ENCODE measurements at regions of chr17 and their contacts with region 1.

Region 1: GRCh38 chr17:39653662-39654331 is 11.4 kb upstream of the TCAP start:
- DNase-seq: peak; percentile 71
- ATAC-seq: peak; percentile 71
- H3K4me3 ChIP-seq: no peak overlapping the region
- H3K4me3 Mint-ChIP-seq: no peak overlapping the region
- H3K27ac ChIP-seq: no peak overlapping the region
- H3K27ac Mint-ChIP-seq: no peak overlapping the region
- H3K4me1 ChIP-seq: peaks cover 8 to 16% of the 10 kb centered on the region in 2 donors
- H3K4me1 Mint-ChIP-seq: peaks cover 36% of the 10 kb centered on the region
- H3K27me3 ChIP-seq: no peaks in the 10 kb centered on the region
- H3K27me3 Mint-ChIP-seq: no peaks in the 10 kb centered on the region
- CTCF ChIP-seq: peak; percentile 80

Region 2: DNA sequence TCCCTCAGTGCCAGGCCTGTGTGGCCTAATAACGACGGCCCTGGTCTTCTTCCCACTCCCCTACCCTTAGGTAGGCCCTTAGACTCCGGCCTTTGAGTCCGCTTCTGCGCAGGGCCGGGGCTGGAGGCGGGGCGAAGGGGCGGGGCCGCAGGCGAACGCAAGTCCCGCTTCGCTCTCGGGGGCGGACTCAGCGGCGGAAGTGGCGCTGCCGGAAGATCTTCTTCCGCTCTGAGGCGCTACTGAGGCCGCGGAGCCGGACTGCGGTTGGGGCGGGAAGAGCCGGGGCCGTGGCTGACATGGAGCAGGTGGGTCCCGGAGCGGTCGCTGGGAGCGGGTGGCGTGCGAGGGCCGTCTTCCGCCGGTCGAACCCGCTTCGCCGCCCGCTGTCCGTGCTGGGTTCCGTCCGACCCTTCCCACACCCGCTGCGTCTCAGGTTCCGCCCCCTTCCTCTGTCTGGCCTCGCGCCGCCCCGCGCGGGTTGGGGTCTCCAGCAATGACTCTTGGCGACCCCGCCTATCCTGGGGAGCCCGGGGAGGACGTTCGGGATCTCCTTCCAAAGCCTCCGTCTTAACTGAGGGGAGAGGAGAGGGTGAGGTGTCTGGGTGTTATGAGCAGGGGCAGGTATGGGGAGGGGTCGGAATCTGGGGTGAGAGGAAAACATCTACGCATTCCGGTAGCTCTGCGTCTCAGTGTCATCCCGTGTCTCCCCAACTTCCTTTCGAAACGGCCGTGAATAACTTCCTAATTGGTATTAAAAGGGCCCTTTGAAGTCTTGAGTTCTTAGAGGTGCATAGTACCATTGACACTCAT is 16.7 kb before region 1 on chr17 and contains the start of gene STARD3:
- CTCF ChIA-PET with region 1: interaction called, 20 read pairs
- POLR2A ChIA-PET with region 1: interaction called, 4 read pairs
- intact Hi-C with region 1: no loop called
- DNase-seq: peak; percentile 93
- ATAC-seq: peak; percentile 92
- H3K4me3 ChIP-seq: peak within 1 kb of the TSS; percentile 76 to 94 (median 82)
- H3K4me3 Mint-ChIP-seq: peak within 1 kb of the TSS; percentile 95
- H3K27ac ChIP-seq: peak within 1 kb of the TSS; percentile 89 to 90
- H3K27ac Mint-ChIP-seq: peak within 1 kb of the TSS; percentile 91
- H3K4me1 ChIP-seq: peaks cover 49 to 63% of the 10 kb centered on the region in 2 donors
- H3K4me1 Mint-ChIP-seq: peaks cover 60% of the 10 kb centered on the region
- H3K27me3 ChIP-seq: peaks cover 0 to 3% (median 0%) of the 10 kb centered on the region in 4 experiments
- H3K27me3 Mint-ChIP-seq: no peaks in the 10 kb centered on the region
- CTCF ChIP-seq: no peak
- total RNA-seq, gene STARD3: 93.1 and 101 TPM in 2 replicates

Region 3: DNA sequence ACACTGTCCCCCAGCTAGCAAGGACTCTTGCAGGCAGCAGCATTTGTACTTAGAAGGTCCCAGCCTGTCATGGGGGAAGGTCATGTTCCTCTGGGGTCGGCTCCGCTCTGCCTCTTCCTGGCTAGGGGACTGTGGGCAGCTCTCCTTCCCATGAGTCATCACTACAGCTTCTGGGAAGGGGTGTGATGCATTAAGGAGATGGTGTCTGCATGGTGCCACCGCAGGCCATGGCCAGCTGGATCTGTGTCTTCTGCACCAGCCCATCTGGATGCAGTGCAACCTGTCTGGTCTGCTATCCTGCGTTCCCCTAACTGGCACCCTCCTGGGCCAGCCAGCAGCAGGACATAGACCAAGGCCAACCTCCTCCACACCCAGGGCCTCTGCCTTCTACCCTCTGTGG is 10.5 kb before region 1 on chr17:
- CTCF ChIA-PET with region 1: interaction called, 22 read pairs
- POLR2A ChIA-PET with region 1: interaction called, 4 read pairs
- intact Hi-C with region 1: no loop called
- DNase-seq: no peak
- ATAC-seq: no peak
- H3K4me3 ChIP-seq: no peak overlapping the region
- H3K4me3 Mint-ChIP-seq: no peak overlapping the region
- H3K27ac ChIP-seq: no peak overlapping the region
- H3K27ac Mint-ChIP-seq: no peak overlapping the region
- H3K4me1 ChIP-seq: peaks cover 30 to 46% of the 10 kb centered on the region in 2 donors
- H3K4me1 Mint-ChIP-seq: peaks cover 55% of the 10 kb centered on the region
- H3K27me3 ChIP-seq: no peaks in the 10 kb centered on the region
- H3K27me3 Mint-ChIP-seq: no peaks in the 10 kb centered on the region
- CTCF ChIP-seq: no peak

Region 4: GRCh38 chr17:39668199-39668966 is 14.6 kb after region 1 on chr17 and contains the start of gene PNMT:
- CTCF ChIA-PET with region 1: interaction called, 61 read pairs
- POLR2A ChIA-PET with region 1: interaction called, 6 read pairs
- intact Hi-C with region 1: no loop called
- DNase-seq: peak; percentile 82
- ATAC-seq: peak; percentile 76
- H3K4me3 ChIP-seq: peak within 1 kb of the TSS in 4 of 5 experiments; percentile 28 to 62 (median 53)
- H3K4me3 Mint-ChIP-seq: peak within 1 kb of the TSS; percentile 75
- H3K27ac ChIP-seq: no peak within 1 kb of the TSS
- H3K27ac Mint-ChIP-seq: peak within 1 kb of the TSS; percentile 7
- H3K4me1 ChIP-seq: peaks cover 24 to 36% of the 10 kb centered on the region in 2 donors
- H3K4me1 Mint-ChIP-seq: peaks cover 27% of the 10 kb centered on the region
- H3K27me3 ChIP-seq: peaks cover 0 to 37% (median 7%) of the 10 kb centered on the region in 4 experiments
- H3K27me3 Mint-ChIP-seq: peaks cover 23% of the 10 kb centered on the region
- CTCF ChIP-seq: peak; percentile 79
- total RNA-seq, gene PNMT: 0.39 and 0.76 TPM in 2 replicates

Region 5: GRCh38 chr17:39676198-39676819 is 22.5 kb after region 1 on chr17:
- CTCF ChIA-PET with region 1: interaction called, 61 read pairs
- POLR2A ChIA-PET with region 1: interaction called, 3 read pairs
- intact Hi-C with region 1: no loop called
- DNase-seq: peak; percentile 69
- ATAC-seq: peak; percentile 61
- H3K4me3 ChIP-seq: no peak overlapping the region
- H3K4me3 Mint-ChIP-seq: peak overlapping the region; percentile 68
- H3K27ac ChIP-seq: peak overlapping the region; percentile 65 to 94
- H3K27ac Mint-ChIP-seq: peak overlapping the region; percentile 98
- H3K4me1 ChIP-seq: peaks cover 79 to 96% of the 10 kb centered on the region in 2 donors
- H3K4me1 Mint-ChIP-seq: peaks cover 85% of the 10 kb centered on the region
- H3K27me3 ChIP-seq: peaks cover 0 to 3% (median 0%) of the 10 kb centered on the region in 4 experiments
- H3K27me3 Mint-ChIP-seq: no peaks in the 10 kb centered on the region
- CTCF ChIP-seq: no peak

Measured in B cell (primary cell).